PC-3 (cell line): ENCODE measurements at regions of chr3 and their contacts with region 1.

Region 1: GRCh38 chr3:38496131-38496910 is at the start of gene EXOG:
- DNase-seq: peak; percentile 92
- ATAC-seq: peak; percentile 93
- H3K4me3 ChIP-seq: peak within 1 kb of the TSS; percentile 86
- H3K27ac ChIP-seq: peak within 1 kb of the TSS; percentile 40
- H3K4me1 ChIP-seq: peaks cover 18% of the 10 kb centered on the region
- H3K27me3 ChIP-seq: no peaks in the 10 kb centered on the region
- CTCF ChIP-seq: peak; percentile 93
- total RNA-seq, gene EXOG: 10.0 and 11.3 TPM in 2 replicates

Region 2: DNA sequence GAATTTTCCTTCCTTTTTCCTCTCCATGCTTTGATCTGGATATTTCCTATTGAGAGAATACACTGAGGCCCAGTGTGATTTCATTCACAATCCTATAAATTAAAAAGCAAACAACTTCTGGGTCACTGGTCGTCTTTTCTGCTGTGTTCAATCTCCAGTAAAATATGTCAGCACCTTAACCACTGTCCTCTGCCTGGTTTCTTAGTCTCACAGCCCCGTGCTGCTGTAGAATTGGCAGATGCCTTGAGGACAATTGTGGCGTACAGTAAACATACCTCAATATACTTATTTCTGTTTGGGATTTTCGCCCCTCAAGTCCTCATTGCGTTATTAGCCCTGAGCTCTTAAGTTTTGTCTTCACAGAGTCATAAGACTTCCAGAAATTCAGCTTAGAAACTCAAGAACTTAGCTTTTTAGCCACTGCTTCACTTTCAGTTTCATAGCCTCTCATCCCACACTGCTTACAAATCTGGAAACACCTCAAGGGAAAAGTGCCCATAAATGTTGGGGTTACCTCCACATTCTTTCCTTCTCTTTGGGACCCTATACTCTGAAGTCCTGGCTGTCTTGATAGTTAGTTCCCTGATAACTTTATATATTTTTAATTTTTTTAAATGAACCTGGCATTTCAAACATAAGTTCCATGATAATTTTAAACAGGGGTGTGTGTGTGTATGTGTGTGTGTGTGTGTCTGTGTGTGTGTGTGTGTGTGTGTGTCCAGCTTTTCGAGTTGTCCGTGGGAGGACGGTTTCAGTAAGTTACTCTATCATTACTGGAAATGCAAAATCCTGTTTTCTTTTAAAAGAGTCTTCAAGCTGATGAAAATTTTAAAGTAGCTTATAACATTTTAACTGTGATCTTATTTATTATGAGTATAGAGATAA is 873.1 kb before region 1 on chr3:
- CTCF ChIA-PET with region 1: no interaction called
- POLR2A ChIA-PET with region 1: no interaction called
- intact Hi-C with region 1: no loop called
- DNase-seq: no peak
- ATAC-seq: no peak
- H3K4me3 ChIP-seq: no peak overlapping the region
- H3K27ac ChIP-seq: no peak overlapping the region
- H3K4me1 ChIP-seq: no peaks in the 10 kb centered on the region
- H3K27me3 ChIP-seq: peaks cover 75% of the 10 kb centered on the region
- CTCF ChIP-seq: no peak

Region 3: DNA sequence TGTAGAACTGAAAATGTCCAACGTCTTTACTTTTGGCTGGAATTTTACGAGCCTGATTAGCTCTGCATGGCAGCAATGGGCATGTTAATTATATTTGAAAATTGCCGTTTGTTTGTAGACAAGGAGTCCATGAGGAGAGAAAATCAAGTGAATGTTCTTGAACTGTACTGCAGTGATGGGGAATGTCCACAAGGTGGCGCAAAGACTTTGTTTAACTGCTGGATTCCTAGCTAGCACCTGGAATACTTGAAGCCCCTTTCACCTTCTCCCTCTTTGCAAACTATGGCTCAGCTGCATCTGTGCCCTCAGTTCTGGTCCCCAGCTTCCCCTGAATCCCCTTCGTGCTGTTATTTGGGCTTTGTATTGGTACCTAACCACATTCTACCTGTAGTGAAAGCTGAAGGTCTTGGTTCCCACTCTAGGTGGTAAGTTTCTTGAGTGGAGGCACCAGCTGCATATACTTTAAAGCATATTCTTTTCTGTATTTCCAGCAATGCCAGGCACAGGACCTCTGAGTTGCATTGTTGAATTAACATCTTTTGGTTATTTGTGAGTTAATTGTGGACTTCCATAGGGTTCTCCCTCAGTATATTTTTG is 25.2 kb after region 1 on chr3:
- CTCF ChIA-PET with region 1: interaction called, 3 read pairs
- POLR2A ChIA-PET with region 1: no interaction called
- intact Hi-C with region 1: loop called (anchors 1 kb)
- DNase-seq: peak; percentile 84
- ATAC-seq: peak; percentile 38
- H3K4me3 ChIP-seq: no peak overlapping the region
- H3K27ac ChIP-seq: no peak overlapping the region
- H3K4me1 ChIP-seq: peaks cover 8% of the 10 kb centered on the region
- H3K27me3 ChIP-seq: no peaks in the 10 kb centered on the region
- CTCF ChIP-seq: peak; percentile 97

Region 4: GRCh38 chr3:38651154-38651789 is 155.0 kb after region 1 on chr3:
- CTCF ChIA-PET with region 1: interaction called, 5 read pairs
- POLR2A ChIA-PET with region 1: no interaction called
- intact Hi-C with region 1: loop called (anchors 1 kb)
- DNase-seq: peak; percentile 70
- ATAC-seq: peak; percentile 50
- H3K4me3 ChIP-seq: no peak overlapping the region
- H3K27ac ChIP-seq: no peak overlapping the region
- H3K4me1 ChIP-seq: peaks cover 3% of the 10 kb centered on the region; the same call in 1 of the 2 replicates
- H3K27me3 ChIP-seq: peaks cover 42% of the 10 kb centered on the region; the same call in 1 of the 2 replicates
- CTCF ChIP-seq: peak; percentile 89

Region 5: DNA sequence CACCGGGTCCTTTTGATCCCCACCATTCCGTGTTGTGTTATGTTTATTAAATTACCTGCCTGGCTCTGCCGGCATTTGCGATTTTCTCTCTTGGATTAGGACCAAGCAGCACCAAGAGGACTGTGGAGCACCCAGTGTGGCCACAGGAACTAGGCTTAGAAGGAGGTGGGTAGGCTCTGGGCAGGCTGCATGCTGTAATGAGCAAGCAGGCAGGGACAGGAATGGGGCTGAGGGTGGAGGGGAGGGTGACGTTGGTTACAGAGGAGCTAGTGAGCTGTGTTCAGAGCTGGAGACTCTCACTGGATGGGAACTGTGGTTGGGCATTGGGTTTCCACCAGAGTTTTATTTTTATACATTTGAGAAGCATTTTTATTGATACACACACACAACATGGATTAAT is 161.0 kb after region 1 on chr3:
- CTCF ChIA-PET with region 1: interaction called, 11 read pairs
- POLR2A ChIA-PET with region 1: no interaction called
- intact Hi-C with region 1: loop called (anchors 1 kb)
- DNase-seq: no peak
- ATAC-seq: no peak
- H3K4me3 ChIP-seq: no peak overlapping the region
- H3K27ac ChIP-seq: no peak overlapping the region
- H3K4me1 ChIP-seq: no peaks in the 10 kb centered on the region
- H3K27me3 ChIP-seq: peaks cover 43% of the 10 kb centered on the region
- CTCF ChIP-seq: no peak

Region 6: GRCh38 chr3:38662544-38662943 is 166.2 kb after region 1 on chr3:
- CTCF ChIA-PET with region 1: interaction called, 11 read pairs
- POLR2A ChIA-PET with region 1: no interaction called
- intact Hi-C with region 1: loop called (anchors 1 kb)
- DNase-seq: peak; percentile 84
- ATAC-seq: peak; percentile 97
- H3K4me3 ChIP-seq: no peak overlapping the region
- H3K27ac ChIP-seq: no peak overlapping the region
- H3K4me1 ChIP-seq: no peaks in the 10 kb centered on the region
- H3K27me3 ChIP-seq: peaks cover 24% of the 10 kb centered on the region
- CTCF ChIP-seq: peak; percentile 91

Region 7: GRCh38 chr3:38843898-38844297 is 347.6 kb after region 1 on chr3:
- CTCF ChIA-PET with region 1: no interaction called
- POLR2A ChIA-PET with region 1: no interaction called
- intact Hi-C with region 1: loop called (anchors 5 kb)
- DNase-seq: peak; percentile 58
- ATAC-seq: peak; percentile 72
- H3K4me3 ChIP-seq: no peak overlapping the region
- H3K27ac ChIP-seq: no peak overlapping the region
- H3K4me1 ChIP-seq: no peaks in the 10 kb centered on the region
- H3K27me3 ChIP-seq: peaks cover 58% of the 10 kb centered on the region
- CTCF ChIP-seq: peak; percentile 64

Region 8: DNA sequence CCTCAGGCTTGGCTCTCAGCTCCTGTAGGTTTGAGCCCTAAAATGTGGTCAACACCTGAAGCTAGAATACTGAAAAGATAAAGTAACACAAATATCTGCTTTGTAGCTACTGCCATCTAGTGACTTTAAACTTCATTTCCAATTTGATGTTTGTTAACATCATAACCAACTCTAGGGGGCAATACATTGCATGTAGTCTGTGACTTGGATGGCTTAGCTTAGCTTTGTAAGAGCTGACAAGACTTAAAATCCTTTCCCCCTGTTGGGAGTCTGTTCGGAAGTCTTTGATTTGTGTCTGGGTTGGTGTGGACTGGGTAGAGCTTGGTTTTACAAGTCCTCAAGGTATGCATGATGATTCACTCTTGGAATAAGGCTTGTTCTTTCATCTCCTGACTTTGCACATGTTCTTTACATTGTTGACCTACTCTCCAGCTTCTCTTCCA is 503.7 kb after region 1 on chr3:
- CTCF ChIA-PET with region 1: no interaction called
- POLR2A ChIA-PET with region 1: no interaction called
- intact Hi-C with region 1: loop called (anchors 1 kb)
- DNase-seq: peak; percentile 90
- ATAC-seq: peak; percentile 88
- H3K4me3 ChIP-seq: no peak overlapping the region
- H3K27ac ChIP-seq: no peak overlapping the region
- H3K4me1 ChIP-seq: no peaks in the 10 kb centered on the region; the same call in 1 of the 2 replicates
- H3K27me3 ChIP-seq: peaks cover 16% of the 10 kb centered on the region
- CTCF ChIP-seq: peak; percentile 99